Right cardiac atrium (tissue), 5 donors: ENCODE measurements at regions of chr11 and their contacts with region 1.

Region 1: DNA sequence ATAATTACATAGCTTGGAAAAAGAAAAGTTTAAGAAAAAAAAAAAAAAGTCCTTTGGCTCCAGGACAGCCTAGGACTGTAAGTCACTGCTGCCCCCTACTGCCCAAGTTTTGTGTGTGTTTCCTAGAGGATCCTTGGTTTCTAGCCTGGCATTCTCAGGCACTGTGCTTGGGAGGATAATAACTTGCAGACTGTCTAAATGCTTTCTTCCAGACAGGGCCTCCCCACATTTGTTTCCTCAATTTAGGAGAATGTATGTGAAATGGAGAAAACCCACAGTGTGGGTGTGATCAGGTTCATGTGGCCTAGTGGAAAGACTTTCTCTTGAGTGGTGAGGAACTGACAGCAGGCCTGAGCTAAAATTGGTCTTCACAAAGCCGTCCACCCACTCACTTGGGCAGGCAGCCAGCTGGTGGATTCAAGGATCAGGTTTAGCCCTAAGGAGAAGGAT is 191.0 kb downstream of the NAV2 start:
- DNase-seq: peak; percentile 75 to 89 (median 79)
- ATAC-seq: peak; percentile 77 to 79
- H3K4me3 ChIP-seq: no peak overlapping the region
- H3K27ac ChIP-seq: no peak overlapping the region
- H3K4me1 ChIP-seq: peaks cover 2% of the 10 kb centered on the region
- H3K27me3 ChIP-seq: no peaks in the 10 kb centered on the region

Region 2: GRCh38 chr11:19306179-19306944 is 597.3 kb before region 1 on chr11:
- intact Hi-C with region 1: loop called in 1 of 4 experiments (anchors 10 kb)
- DNase-seq: no peak
- ATAC-seq: no peak
- H3K4me3 ChIP-seq: no peak overlapping the region
- H3K27ac ChIP-seq: no peak overlapping the region
- H3K4me1 ChIP-seq: no peaks in the 10 kb centered on the region
- H3K27me3 ChIP-seq: no peaks in the 10 kb centered on the region

Region 3: DNA sequence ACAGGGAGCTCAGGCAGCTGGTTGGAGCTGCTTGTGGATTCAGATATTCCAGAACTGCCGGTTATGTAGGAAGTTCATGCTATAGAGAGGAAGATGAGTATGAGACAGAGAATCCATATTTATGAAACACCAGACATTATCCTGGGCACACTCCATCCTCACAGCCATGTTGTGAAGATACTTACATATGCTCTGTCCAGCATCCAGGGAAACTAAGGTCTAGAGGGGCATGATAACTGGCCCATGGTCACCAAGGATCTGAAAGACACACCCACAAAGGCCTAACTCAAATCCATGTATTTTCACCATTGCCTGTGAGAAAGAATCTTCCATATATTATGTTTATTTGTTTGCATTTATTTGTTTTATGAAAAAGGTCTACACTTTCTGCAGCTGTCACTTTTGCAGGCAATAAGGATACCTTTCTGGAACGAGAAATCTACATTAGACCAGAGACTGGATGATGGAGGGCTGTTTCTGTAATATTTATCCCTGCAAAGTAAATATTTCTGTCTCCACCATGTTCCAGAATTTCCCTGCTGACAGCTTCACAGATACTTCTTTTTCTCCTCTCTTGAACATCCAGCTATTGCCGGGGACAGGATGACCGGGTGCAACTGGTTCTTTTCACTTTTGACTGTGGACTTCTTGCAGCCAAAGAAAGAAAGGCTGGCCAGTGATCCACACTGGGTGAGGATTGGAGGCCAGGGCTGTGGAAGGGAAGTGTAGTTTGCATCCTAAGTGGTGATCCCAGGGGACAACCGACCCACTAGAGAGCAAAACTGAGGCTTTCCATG is 336.9 kb before region 1 on chr11:
- intact Hi-C with region 1: loop called in 2 of 4 experiments (anchors 5 to 10 kb)
- DNase-seq: no peak
- ATAC-seq: no peak
- H3K4me3 ChIP-seq: no peak overlapping the region
- H3K27ac ChIP-seq: no peak overlapping the region
- H3K4me1 ChIP-seq: no peaks in the 10 kb centered on the region
- H3K27me3 ChIP-seq: no peaks in the 10 kb centered on the region

Region 4: DNA sequence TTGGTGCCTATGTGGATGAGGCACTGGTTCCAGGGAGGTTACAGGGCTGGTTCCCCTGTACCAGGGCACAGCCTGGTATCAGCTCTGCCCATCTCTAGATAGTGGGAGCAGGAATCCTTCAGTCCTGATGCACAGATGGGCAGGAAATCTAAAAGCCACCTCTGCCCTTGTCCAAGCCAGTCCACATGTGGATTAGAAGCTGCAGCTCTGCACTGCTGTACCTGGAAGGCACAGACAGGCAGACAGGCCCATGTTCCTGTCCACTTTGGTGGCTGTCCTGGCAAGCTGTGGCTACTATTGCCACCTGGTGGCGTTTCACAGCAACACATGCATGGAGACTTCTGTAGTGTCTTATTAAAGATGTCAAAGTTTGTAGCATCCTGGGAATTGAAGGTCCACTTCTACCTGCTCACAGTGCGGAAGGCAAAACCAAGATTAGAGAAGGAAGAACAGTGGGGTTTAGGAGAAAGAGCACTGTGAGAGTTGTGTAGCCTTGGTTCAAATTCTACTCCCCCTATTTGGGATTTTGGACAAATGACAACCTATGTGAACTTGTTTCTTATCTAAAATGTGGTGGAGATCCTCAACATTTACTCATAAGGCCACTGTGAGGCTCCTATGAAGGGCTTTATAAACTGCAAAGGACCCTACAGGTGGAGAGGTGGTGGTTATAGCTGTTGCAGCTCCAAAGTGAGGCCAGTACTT is 160.9 kb before region 1 on chr11:
- intact Hi-C with region 1: loop called in 2 of 4 experiments (anchors 5 to 10 kb)
- DNase-seq: peak; percentile 76 to 90 (median 87)
- ATAC-seq: peak; percentile 85 to 90
- H3K4me3 ChIP-seq: no peak overlapping the region
- H3K27ac ChIP-seq: no peak overlapping the region
- H3K4me1 ChIP-seq: peaks cover 7% of the 10 kb centered on the region
- H3K27me3 ChIP-seq: no peaks in the 10 kb centered on the region

Region 5: GRCh38 chr11:19814421-19814820 is 89.2 kb before region 1 on chr11:
- intact Hi-C with region 1: loop called in 1 of 4 experiments (anchors 10 kb)
- DNase-seq: no peak
- ATAC-seq: no peak
- H3K4me3 ChIP-seq: no peak overlapping the region
- H3K27ac ChIP-seq: peak overlapping the region; percentile 23
- H3K4me1 ChIP-seq: peaks cover 11% of the 10 kb centered on the region
- H3K27me3 ChIP-seq: no peaks in the 10 kb centered on the region